Right ventricle myocardium inferior (tissue), 1 donor: ENCODE measurements at regions of chr13 and their contacts with region 1.

Region 1: DNA sequence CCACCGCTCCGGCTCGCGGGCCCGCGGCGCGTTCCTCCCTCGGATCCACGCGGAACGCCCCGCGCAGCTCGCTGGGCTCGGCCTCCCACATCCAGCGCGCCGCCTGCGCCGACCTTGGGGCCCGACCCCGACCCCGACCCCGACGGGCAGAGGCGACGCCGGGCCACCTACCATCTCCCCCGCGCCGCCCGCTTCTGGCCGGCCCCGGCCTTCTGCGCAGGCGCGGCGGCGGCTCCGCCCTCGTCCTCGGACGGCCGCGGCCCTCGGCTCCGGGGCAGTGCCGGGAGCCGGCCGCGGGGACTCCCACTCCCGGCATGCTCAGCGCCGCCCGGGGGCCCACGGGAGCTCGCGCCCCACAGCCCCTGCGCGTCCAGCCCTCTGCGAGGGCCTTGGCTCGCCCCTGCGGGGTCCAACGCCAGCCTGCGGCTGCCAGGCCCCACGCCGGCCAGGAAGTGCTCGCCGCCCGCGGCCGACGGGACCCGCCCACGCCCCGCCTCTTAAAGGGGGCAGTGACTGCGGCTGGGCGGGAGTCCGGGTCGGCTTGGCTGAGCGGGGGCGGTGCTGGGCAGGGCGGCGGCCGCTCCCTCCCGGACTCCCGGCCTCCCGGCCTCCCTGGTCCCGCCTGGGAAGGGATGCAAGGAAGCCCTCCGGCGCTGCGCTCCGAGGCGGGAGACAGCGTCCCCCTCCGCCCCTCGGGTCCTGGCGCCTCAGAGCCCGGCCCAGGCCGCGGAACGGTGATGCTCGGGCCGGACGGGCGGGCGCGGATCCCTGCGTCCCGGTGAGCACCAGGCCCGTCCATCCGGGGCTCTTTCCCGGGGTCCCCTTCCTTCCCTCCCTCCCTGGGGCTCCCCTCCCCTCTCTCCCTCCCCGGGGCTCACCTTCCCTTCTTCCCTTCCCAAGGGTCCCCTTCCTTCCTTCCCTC is at the start of gene DCUN1D2:
- DNase-seq: peak; percentile 97
- ATAC-seq: peak; percentile 95
- total RNA-seq, gene DCUN1D2: 194 TPM

Region 2: DNA sequence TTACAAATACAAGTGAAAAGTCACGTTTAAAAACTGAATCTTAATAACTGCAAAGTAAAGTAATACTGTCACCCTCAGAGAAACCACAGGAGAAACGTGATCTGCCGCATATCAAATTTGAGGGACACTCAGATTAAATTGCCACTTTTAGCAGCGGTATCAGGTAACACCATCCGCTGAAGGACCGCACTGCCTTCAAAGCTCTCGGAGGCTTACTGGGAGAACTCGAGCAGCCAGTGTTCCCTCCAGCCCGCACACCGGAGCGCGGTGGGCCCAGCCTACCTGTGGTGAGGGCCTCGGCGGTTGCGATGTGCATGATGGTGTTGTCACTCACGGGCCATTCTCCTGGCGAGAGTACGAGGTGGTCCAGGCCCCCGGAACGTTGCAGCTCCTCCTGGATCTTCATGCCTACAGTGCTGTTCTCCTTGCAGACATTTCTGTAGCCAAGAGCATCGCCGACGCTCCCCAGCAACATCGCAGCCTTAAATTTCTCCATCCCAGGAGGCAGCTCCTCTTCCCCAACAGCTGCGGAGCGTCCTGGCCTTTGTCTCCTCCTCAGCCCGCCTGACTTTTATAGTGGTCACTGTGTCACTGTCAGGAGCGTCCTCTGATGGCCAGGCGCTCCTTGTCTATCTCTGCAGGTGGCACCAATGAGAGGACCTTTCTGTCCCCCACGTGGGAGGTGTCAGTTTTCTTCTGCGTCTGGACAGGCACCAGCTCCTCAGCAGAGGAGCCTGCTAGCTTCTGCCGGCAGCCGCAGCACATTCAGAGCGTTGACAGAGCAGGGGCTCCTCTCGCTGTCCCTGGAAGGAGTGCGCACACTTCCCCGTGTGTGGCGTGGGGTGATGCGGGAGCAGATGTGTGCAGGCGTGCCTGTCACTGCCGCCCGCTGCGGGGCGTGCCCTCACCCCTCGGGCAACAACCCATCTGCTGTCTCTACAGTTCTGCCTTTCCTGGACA is 37.5 kb before region 1 on chr13 and contains the start of gene ADPRHL1:
- intact Hi-C with region 1: loop called (anchors 5 kb)
- DNase-seq: no peak
- ATAC-seq: peak; percentile 77
- total RNA-seq, gene ADPRHL1: 468 TPM

Region 3: GRCh38 chr13:113458253-113459065 is 32.3 kb before region 1 on chr13:
- intact Hi-C with region 1: loop called (anchors 2 kb)
- DNase-seq: no peak
- ATAC-seq: peak; percentile 64

Region 4: DNA sequence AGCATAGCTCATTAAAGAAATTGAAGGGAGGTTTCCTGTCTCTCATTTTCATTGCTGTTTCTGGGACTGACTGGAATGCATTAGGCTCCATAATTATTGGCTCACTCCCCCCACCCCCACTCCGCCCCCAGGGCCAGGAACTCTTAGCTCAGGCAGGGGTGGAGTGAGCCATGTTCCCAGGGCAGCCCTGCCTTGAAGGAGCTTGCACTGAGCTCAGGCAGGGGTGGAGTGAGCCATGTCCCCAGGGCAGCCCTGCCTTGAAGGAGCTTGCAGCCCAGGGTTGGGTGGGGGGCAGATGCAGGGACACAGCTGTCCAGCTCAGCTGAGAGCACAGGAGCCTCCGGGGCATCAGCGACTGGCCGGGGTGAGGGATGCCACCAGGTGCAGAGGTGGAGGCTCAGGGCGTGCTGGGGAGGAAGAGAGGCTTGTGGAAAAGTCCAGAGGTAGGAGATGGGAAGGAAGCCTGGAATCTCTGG is 54.7 kb after region 1 on chr13:
- intact Hi-C with region 1: loop called (anchors 5 kb)
- DNase-seq: no peak
- ATAC-seq: peak; percentile 40